ENCODE measurements at regions of chr13 and their contacts with region 1.

Region 1: GRCh38 chr13:48233046-48233907 is at the start of gene ITM2B:
- DNase-seq: peak; percentile 91
- H3K4me3 ChIP-seq: peak within 1 kb of the TSS; percentile 86 to 98 (median 94)
- H3K27ac ChIP-seq: peak within 1 kb of the TSS; percentile 96 to 100 (median 99)
- H3K4me1 ChIP-seq: peaks cover 0 to 45% (median 37%) of the 10 kb centered on the region in 4 donors
- H3K27me3 ChIP-seq: no peaks in the 10 kb centered on the region
- CTCF ChIP-seq: peak in 2 of 4 experiments; percentile 28 to 49
- EP300 ChIP-seq: no peak
- POLR2A ChIP-seq: peak in 1 of 2 donors; percentile 66
- total RNA-seq, gene ITM2B: 266 to 478 (median 371) TPM

Region 2: GRCh38 chr13:48094781-48095502 is 138.3 kb before region 1 on chr13 and contains the start of gene MED4:
- intact Hi-C with region 1: loop called (anchors 1 kb)
- DNase-seq: peak; percentile 96
- H3K4me3 ChIP-seq: peak within 1 kb of the TSS; percentile 80 to 95 (median 90)
- H3K27ac ChIP-seq: peak within 1 kb of the TSS; percentile 78 to 88 (median 88)
- H3K4me1 ChIP-seq: peaks cover 0 to 40% (median 25%) of the 10 kb centered on the region in 4 donors
- H3K27me3 ChIP-seq: no peaks in the 10 kb centered on the region
- CTCF ChIP-seq: peak; percentile 96 to 99 (median 98)
- EP300 ChIP-seq: peak in 1 of 4 donors; percentile 74
- POLR2A ChIP-seq: peak; percentile 88 to 90
- total RNA-seq, gene MED4: 38.5 to 63.5 (median 43.5) TPM

Region 3: GRCh38 chr13:48303359-48304142 is 70.3 kb after region 1 on chr13 and contains the start of gene RB1:
- intact Hi-C with region 1: loop called (anchors 2 kb)
- DNase-seq: peak; percentile 97
- H3K4me3 ChIP-seq: peak within 1 kb of the TSS; percentile 81 to 95 (median 84)
- H3K27ac ChIP-seq: peak within 1 kb of the TSS; percentile 96 to 99 (median 98)
- H3K4me1 ChIP-seq: peaks cover 0 to 31% (median 26%) of the 10 kb centered on the region in 4 donors
- H3K27me3 ChIP-seq: no peaks in the 10 kb centered on the region
- CTCF ChIP-seq: no peak
- EP300 ChIP-seq: peak in 1 of 4 donors; percentile 76
- POLR2A ChIP-seq: peak; percentile 96 to 98
- total RNA-seq, gene RB1: 26.0 to 35.6 (median 32.3) TPM

Region 4: DNA sequence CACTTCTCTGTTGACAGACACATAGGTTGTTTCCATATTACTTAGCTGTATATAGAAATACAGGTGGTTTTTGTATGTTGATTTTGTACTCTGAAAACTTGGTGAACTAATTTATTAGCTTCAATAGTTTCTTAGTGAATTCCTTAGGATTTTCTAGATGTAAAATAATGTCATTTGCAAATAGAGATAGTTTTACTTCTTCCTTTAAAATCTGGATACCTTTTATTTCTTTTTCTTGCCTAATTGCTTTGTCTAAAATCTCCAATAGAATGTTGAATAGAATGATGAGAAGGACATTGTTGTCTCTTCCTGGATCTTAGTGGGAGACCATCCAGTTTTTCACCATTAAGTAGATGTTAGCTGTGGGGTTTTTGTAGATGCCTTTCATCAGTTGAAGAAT is 89.0 kb after region 1 on chr13:
- intact Hi-C with region 1: no loop called
- DNase-seq: no peak
- H3K4me3 ChIP-seq: no peak overlapping the region
- H3K27ac ChIP-seq: no peak overlapping the region
- H3K4me1 ChIP-seq: peaks cover 0 to 20% (median 2%) of the 10 kb centered on the region in 4 donors
- H3K27me3 ChIP-seq: no peaks in the 10 kb centered on the region
- CTCF ChIP-seq: no peak
- EP300 ChIP-seq: no peak
- POLR2A ChIP-seq: no peak

Region 5: GRCh38 chr13:48571126-48571913 is 338.0 kb after region 1 on chr13:
- intact Hi-C with region 1: loop called (anchors 5 kb)
- DNase-seq: no peak
- H3K4me3 ChIP-seq: peak overlapping the region in 2 of 4 donors; percentile 33
- H3K27ac ChIP-seq: peak overlapping the region; percentile 65 to 83 (median 78)
- H3K4me1 ChIP-seq: peaks cover 0 to 44% (median 24%) of the 10 kb centered on the region in 4 donors
- H3K27me3 ChIP-seq: no peaks in the 10 kb centered on the region
- CTCF ChIP-seq: no peak
- EP300 ChIP-seq: no peak
- POLR2A ChIP-seq: no peak